ENCODE measurements at regions of chr2 and their contacts with region 1.

Region 1: GRCh38 chr2:177169810-177170514 is 42.6 kb upstream of the HNRNPA3 start:
- DNase-seq: no peak
- H3K4me3 ChIP-seq: no peak overlapping the region
- H3K27ac ChIP-seq: peak overlapping the region; percentile 74 to 88 (median 79)
- H3K4me1 ChIP-seq: peaks cover 0 to 76% (median 47%) of the 10 kb centered on the region in 3 donors
- H3K27me3 ChIP-seq: no peaks in the 10 kb centered on the region
- CTCF ChIP-seq: peak in 1 of 6 experiments; percentile 1
- POLR2A ChIP-seq: peak in 1 of 4 donors; percentile 17

Region 2: DNA sequence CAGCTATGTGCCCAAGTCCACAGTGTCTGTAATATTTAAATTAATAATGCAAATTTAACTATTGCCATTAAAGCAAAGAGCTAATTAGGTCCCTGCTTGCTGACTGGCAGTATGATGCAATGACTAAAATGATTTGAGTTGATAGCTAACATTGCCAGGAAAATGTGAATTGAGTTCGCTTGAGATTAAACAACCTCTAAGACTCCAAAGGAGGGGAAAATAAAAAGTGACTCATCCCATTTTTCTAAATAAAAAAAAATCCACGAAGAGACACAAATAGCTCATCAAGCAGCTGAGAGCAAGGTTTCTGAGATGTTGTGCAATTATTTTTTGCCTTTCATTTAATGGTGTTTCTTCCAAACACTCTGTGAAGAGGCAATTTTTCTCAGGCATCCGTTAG is 487.7 kb before region 1 on chr2:
- intact Hi-C with region 1: no loop called
- DNase-seq: no peak
- H3K4me3 ChIP-seq: no peak overlapping the region
- H3K27ac ChIP-seq: no peak overlapping the region
- H3K4me1 ChIP-seq: no peaks in the 10 kb centered on the region
- H3K27me3 ChIP-seq: peaks cover 0 to 15% (median 0%) of the 10 kb centered on the region in 4 donors
- CTCF ChIP-seq: no peak
- POLR2A ChIP-seq: no peak

Region 3: DNA sequence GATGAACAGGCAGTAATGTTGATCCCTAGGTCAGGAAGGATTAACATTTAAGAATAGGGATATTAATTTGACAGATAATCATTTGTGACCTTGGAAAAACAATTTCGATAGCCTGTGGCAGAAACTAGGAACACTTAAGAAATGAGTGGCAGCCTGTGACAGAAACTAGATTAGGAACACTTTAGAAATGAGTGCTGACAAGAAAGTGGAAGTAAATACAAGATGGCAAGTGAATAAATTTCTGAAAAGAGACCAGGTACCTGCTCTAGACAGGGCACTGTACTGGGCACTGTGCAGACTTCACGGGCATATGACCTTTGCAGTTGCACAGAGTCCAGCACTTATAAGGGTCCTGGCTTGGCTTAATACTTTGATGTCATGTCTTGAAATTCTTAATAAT is 37.1 kb after region 1 on chr2:
- intact Hi-C with region 1: loop called (anchors 5 kb)
- DNase-seq: no peak
- H3K4me3 ChIP-seq: no peak overlapping the region
- H3K27ac ChIP-seq: no peak overlapping the region
- H3K4me1 ChIP-seq: peaks cover 7 to 16% (median 7%) of the 10 kb centered on the region in 3 donors
- H3K27me3 ChIP-seq: no peaks in the 10 kb centered on the region
- CTCF ChIP-seq: no peak
- POLR2A ChIP-seq: no peak

Region 4: DNA sequence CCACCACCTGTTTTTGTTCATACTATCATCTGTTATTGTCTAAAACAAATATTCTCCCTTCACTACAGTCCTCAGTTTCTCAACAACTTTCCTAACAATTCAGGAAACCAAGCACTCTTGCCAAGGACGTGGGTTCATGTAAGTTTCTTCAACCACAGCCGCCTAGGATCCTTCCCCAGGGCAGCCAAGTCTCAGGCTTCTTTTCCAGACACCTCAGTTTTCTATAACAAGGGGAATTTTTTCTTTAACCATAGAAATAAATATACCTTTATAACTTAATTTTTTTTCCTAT is 183.2 kb after region 1 on chr2:
- intact Hi-C with region 1: no loop called
- DNase-seq: no peak
- H3K4me3 ChIP-seq: no peak overlapping the region
- H3K27ac ChIP-seq: peak overlapping the region; percentile 72 to 83 (median 78)
- H3K4me1 ChIP-seq: peaks cover 11 to 35% (median 18%) of the 10 kb centered on the region in 3 donors
- H3K27me3 ChIP-seq: no peaks in the 10 kb centered on the region
- CTCF ChIP-seq: no peak
- POLR2A ChIP-seq: no peak